SK-N-SH (cell line): ENCODE measurements at regions of chr9 and their contacts with region 1.

Region 1: GRCh38 chr9:26326473-26327044 is 566.0 kb downstream of the CAAP1 start:
- DNase-seq: peak; percentile 44
- H3K4me3 ChIP-seq: no peak overlapping the region
- H3K27ac ChIP-seq: peak overlapping the region; percentile 28; a peak in 3 of 4 replicates
- H3K4me1 ChIP-seq: peaks cover 2 to 8% of the 10 kb centered on the region in 2 experiments; a peak in 3 of 4 replicates
- H3K27me3 ChIP-seq: no peaks in the 10 kb centered on the region
- CTCF ChIP-seq: peak; percentile 96
- EP300 ChIP-seq: no peak
- RAD21 ChIP-seq: peak; percentile 95

Region 2: GRCh38 chr9:25964239-25964638 is 362.3 kb before region 1 on chr9:
- CTCF ChIA-PET with region 1: interaction called, 30 read pairs
- POLR2A ChIA-PET with region 1: no interaction called
- DNase-seq: peak; percentile 52
- H3K4me3 ChIP-seq: no peak overlapping the region; a peak in 1 of 4 replicates
- H3K27ac ChIP-seq: no peak overlapping the region
- H3K4me1 ChIP-seq: no peaks in the 10 kb centered on the region
- H3K27me3 ChIP-seq: no peaks in the 10 kb centered on the region
- CTCF ChIP-seq: peak; percentile 70
- EP300 ChIP-seq: no peak
- RAD21 ChIP-seq: peak; percentile 87

Region 3: DNA sequence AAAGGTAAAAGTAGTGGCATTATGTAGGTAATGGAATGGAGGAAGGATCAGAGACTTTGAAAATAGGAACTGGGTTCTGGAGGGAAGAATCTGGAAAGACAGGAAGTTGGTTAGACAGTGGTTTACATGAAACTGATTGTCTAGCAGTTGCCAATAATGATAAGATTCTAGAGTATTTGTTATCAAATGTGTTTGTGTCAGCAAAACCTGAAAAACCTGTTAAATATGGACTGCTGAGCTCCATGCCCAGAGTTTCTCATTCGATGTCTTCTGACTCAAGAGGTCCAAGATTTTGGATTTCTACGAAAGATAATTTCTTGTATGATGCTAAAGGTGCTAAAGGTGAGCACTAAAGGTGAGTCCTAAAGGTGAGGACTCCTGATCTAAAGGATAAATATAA is 133.3 kb before region 1 on chr9:
- CTCF ChIA-PET with region 1: no interaction called
- POLR2A ChIA-PET with region 1: no interaction called
- DNase-seq: no peak
- H3K4me3 ChIP-seq: no peak overlapping the region
- H3K27ac ChIP-seq: no peak overlapping the region
- H3K4me1 ChIP-seq: no peaks in the 10 kb centered on the region
- H3K27me3 ChIP-seq: no peaks in the 10 kb centered on the region
- CTCF ChIP-seq: no peak
- EP300 ChIP-seq: no peak
- RAD21 ChIP-seq: no peak

Region 4: GRCh38 chr9:26271495-26272122 is 55.0 kb before region 1 on chr9:
- CTCF ChIA-PET with region 1: no interaction called
- POLR2A ChIA-PET with region 1: no interaction called
- DNase-seq: no peak
- H3K4me3 ChIP-seq: no peak overlapping the region
- H3K27ac ChIP-seq: no peak overlapping the region
- H3K4me1 ChIP-seq: peaks cover 1 to 5% of the 10 kb centered on the region in 2 experiments; a peak in 2 of 4 replicates
- H3K27me3 ChIP-seq: no peaks in the 10 kb centered on the region
- CTCF ChIP-seq: no peak
- EP300 ChIP-seq: no peak
- RAD21 ChIP-seq: no peak

Region 5: DNA sequence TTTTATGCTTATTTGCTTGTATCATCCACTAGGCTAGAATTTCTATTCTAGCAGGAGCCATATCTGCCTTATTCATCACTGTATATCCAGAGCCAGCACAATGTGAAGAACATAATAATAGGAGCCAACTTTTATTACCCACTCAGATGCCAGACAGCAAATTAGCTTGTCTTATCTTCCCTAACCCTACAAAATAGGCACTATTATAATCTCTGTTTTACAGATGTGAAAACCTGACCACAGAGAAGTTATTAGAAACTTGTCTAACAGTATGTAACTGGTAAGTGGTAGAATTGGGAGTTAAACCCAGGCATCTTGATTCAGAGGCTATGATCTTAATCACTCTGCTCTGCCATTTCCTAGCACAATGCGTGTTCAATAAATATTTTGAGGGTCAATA is 13.5 kb before region 1 on chr9:
- CTCF ChIA-PET with region 1: interaction called, 44 read pairs
- POLR2A ChIA-PET with region 1: no interaction called
- DNase-seq: peak; percentile 16
- H3K4me3 ChIP-seq: no peak overlapping the region
- H3K27ac ChIP-seq: no peak overlapping the region; a peak in 1 of 4 replicates
- H3K4me1 ChIP-seq: no peaks in the 10 kb centered on the region; a peak in 2 of 4 replicates
- H3K27me3 ChIP-seq: no peaks in the 10 kb centered on the region
- CTCF ChIP-seq: no peak
- EP300 ChIP-seq: peak in 1 of 2 experiments; percentile 74; a peak in 1 of 4 replicates
- RAD21 ChIP-seq: no peak

Region 6: GRCh38 chr9:26339796-26340195 is 13.2 kb after region 1 on chr9:
- CTCF ChIA-PET with region 1: interaction called, 14 read pairs
- POLR2A ChIA-PET with region 1: no interaction called
- DNase-seq: no peak
- H3K4me3 ChIP-seq: no peak overlapping the region
- H3K27ac ChIP-seq: no peak overlapping the region
- H3K4me1 ChIP-seq: no peaks in the 10 kb centered on the region
- H3K27me3 ChIP-seq: no peaks in the 10 kb centered on the region
- CTCF ChIP-seq: no peak
- EP300 ChIP-seq: no peak
- RAD21 ChIP-seq: no peak

Region 7: DNA sequence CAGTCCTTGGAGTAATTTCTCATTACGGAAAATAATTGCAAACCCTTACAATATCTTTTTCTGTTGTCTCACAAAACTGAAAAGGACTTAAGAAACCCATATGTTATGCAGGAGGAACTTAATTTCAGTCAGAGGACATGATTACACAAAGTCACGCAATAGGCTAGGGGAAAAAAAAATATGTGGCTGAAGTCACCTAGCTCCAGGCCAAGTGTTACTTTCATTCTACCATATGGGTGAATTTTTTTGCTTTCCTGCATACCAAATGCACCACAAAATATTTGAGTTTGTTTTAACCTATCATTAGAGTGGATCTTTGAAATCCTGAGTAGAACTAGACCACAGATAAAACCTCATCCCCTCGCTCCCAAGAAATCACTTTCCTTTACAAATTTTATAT is 42.5 kb after region 1 on chr9:
- CTCF ChIA-PET with region 1: no interaction called
- POLR2A ChIA-PET with region 1: no interaction called
- DNase-seq: no peak
- H3K4me3 ChIP-seq: no peak overlapping the region
- H3K27ac ChIP-seq: no peak overlapping the region
- H3K4me1 ChIP-seq: no peaks in the 10 kb centered on the region
- H3K27me3 ChIP-seq: no peaks in the 10 kb centered on the region
- CTCF ChIP-seq: no peak
- EP300 ChIP-seq: no peak
- RAD21 ChIP-seq: no peak

Region 8: GRCh38 chr9:26656003-26656870 is 329.7 kb after region 1 on chr9:
- CTCF ChIA-PET with region 1: interaction called, 34 read pairs
- POLR2A ChIA-PET with region 1: no interaction called
- DNase-seq: peak; percentile 61
- H3K4me3 ChIP-seq: peak overlapping the region in 1 of 2 experiments; percentile 13; a peak in 1 of 4 replicates
- H3K27ac ChIP-seq: no peak overlapping the region
- H3K4me1 ChIP-seq: peaks cover 0 to 3% of the 10 kb centered on the region in 2 experiments; a peak in 2 of 4 replicates
- H3K27me3 ChIP-seq: no peaks in the 10 kb centered on the region
- CTCF ChIP-seq: peak; percentile 60
- EP300 ChIP-seq: no peak
- RAD21 ChIP-seq: peak; percentile 73